Activated B cell treated with CpG ODN at 0.5 μM for 24 hours (primary cell): ENCODE measurements at regions of chr21 and their contacts with region 1.

Region 1: GRCh38 chr21:30695956-30696355 is 22.6 kb downstream of the KRTAP21-3 start:
- DNase-seq: no peak
- ATAC-seq: no peak
- H3K4me3 Mint-ChIP-seq: no peak overlapping the region
- H3K27ac Mint-ChIP-seq: no peak overlapping the region
- H3K4me1 Mint-ChIP-seq: no peaks in the 10 kb centered on the region
- H3K27me3 Mint-ChIP-seq: no peaks in the 10 kb centered on the region
- CTCF ChIP-seq: no peak

Region 2: GRCh38 chr21:30194701-30195299 is 501.2 kb before region 1 on chr21:
- CTCF ChIA-PET with region 1: no interaction called
- POLR2A ChIA-PET with region 1: no interaction called
- intact Hi-C with region 1: no loop called
- DNase-seq: no peak
- ATAC-seq: no peak
- H3K4me3 Mint-ChIP-seq: no peak overlapping the region
- H3K27ac Mint-ChIP-seq: no peak overlapping the region
- H3K4me1 Mint-ChIP-seq: no peaks in the 10 kb centered on the region
- H3K27me3 Mint-ChIP-seq: no peaks in the 10 kb centered on the region
- CTCF ChIP-seq: no peak

Region 3: DNA sequence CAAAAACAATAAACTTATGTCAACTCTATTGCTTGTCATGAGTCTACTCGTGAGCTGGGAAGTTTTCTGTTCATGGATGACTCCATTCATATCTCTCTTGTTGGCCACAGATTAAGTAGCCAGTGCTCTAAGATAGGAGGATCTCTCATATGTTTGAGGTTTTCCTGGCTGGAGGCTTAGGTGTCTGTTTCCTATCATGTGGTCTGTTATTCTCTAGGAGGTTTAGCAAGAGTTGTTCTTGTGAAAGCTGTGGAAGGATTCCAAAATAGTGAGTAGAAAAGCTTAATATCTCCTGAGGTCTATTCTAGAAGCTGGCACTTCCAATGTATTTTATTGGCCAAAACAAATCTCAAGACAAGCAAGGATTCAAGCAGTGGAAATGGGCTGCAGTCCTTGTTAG is 66.8 kb before region 1 on chr21:
- CTCF ChIA-PET with region 1: no interaction called
- POLR2A ChIA-PET with region 1: no interaction called
- intact Hi-C with region 1: loop called (anchors 10 kb)
- DNase-seq: no peak
- ATAC-seq: no peak
- H3K4me3 Mint-ChIP-seq: no peak overlapping the region
- H3K27ac Mint-ChIP-seq: no peak overlapping the region
- H3K4me1 Mint-ChIP-seq: no peaks in the 10 kb centered on the region
- H3K27me3 Mint-ChIP-seq: no peaks in the 10 kb centered on the region
- CTCF ChIP-seq: no peak